ENCODE measurements at regions of chr15 and their contacts with region 1.

Region 1: DNA sequence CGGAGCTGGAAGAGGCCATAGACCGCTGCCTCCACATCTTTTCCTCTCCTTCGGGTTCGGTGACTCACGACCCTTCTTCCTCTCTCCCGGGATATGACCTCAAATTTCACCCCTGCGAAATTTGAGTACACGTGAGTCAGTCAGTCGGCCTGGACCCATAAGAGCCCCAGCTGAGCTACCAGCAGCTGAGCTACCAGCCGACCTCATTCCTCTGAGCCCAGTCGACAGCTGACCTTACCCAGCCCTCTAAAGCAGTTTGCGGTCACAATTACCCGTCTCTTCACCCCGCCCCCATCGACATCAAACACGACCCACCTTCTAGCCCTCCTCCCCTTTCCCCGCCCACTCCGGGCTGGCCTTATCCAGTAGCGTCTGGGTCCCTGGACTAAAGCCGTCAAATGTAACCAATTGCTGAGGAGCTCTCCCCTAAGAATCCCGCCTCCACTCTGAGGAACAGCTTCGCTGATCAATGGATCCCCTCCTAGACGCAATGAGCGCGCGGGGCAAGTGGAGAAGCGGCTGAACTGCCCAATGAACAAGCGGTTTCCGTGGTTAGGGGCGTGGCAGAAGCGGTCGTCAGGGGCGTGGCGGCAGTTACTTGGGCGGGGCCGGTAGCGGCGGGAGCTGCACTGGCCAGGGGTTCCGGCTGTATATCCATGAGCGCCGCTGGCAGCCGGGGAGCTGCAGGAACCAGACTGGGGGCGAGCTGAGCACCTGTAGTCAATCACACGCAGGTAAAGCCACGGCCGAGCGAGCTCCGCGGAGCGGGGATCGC is at the start of gene ABHD2:
- DNase-seq: peak; percentile 93 to 99 (median 97)
- ATAC-seq: peak; percentile 97
- H3K4me3 ChIP-seq: peak within 1 kb of the TSS; percentile 78
- H3K4me3 Mint-ChIP-seq: peak within 1 kb of the TSS in 1 of 10 donors; percentile 8
- H3K27ac ChIP-seq: peak within 1 kb of the TSS; percentile 81
- H3K27ac Mint-ChIP-seq: peak within 1 kb of the TSS in 7 of 9 donors; percentile 90 to 100 (median 97)
- H3K4me1 ChIP-seq: peaks cover 26 to 29% of the 10 kb centered on the region in 2 donors
- H3K4me1 Mint-ChIP-seq: peaks cover 30 to 43% (median 32%) of the 10 kb centered on the region in 7 donors
- H3K27me3 ChIP-seq: no peaks in the 10 kb centered on the region
- H3K27me3 Mint-ChIP-seq: no peaks in the 10 kb centered on the region
- total RNA-seq, gene ABHD2: 43.6 to 85.0 (median 67.7) TPM

Region 2: DNA sequence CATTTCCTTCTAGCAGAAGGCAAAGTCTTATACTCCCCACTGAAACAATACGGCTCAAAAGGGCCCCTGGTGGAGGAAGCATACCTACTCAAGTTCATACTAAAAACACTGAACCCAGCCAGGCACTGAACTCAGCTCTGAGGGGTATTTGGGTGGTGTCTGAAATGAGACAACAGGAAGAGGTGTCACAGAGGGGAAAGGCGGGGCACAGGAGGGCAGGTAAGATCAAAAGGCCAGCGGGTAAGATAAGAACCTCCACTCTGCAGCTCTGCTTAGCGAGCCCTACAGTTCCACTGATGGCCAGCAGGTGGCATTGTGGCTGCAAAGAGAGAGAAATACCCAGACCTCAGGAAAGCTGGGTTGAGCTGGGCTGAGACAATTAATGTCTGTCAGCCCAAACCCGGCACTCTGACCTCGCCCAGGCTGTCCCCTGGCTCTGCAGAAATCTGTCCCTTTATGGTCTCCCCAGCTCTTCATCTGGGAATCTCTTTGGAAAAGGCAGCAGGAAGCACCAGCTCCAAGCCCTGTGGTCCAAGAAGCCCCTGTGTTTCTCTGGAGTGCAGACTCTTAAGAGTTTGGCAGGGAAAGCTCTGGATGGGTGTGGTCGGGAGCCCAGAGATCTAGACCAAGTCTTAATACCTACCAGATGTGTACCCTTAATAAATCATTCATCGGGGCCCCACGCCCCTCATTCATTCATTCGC is 183.2 kb before region 1 on chr15:
- CTCF ChIA-PET with region 1: interaction called, 4 read pairs
- POLR2A ChIA-PET with region 1: interaction called, 5 read pairs
- intact Hi-C with region 1: loop called (anchors 1 to 2 kb)
- DNase-seq: peak; percentile 79 to 99 (median 98)
- ATAC-seq: peak; percentile 99
- H3K4me3 ChIP-seq: no peak overlapping the region
- H3K4me3 Mint-ChIP-seq: peak overlapping the region; percentile 16 to 78 (median 54)
- H3K27ac ChIP-seq: peak overlapping the region; percentile 70
- H3K27ac Mint-ChIP-seq: peak overlapping the region; percentile 76 to 98 (median 94)
- H3K4me1 ChIP-seq: peaks cover 19 to 37% of the 10 kb centered on the region in 2 donors
- H3K4me1 Mint-ChIP-seq: peaks cover 23 to 65% (median 52%) of the 10 kb centered on the region in 7 donors
- H3K27me3 ChIP-seq: no peaks in the 10 kb centered on the region
- H3K27me3 Mint-ChIP-seq: no peaks in the 10 kb centered on the region

Region 3: GRCh38 chr15:89017370-89018066 is 70.5 kb before region 1 on chr15:
- CTCF ChIA-PET with region 1: no interaction called
- POLR2A ChIA-PET with region 1: no interaction called
- intact Hi-C with region 1: loop called in 1 of 2 experiments (anchors 1 kb)
- DNase-seq: peak; percentile 73 to 88 (median 82)
- ATAC-seq: peak; percentile 96
- H3K4me3 ChIP-seq: peak overlapping the region; percentile 31
- H3K4me3 Mint-ChIP-seq: peak overlapping the region; percentile 56 to 83 (median 70)
- H3K27ac ChIP-seq: no peak overlapping the region
- H3K27ac Mint-ChIP-seq: peak overlapping the region; percentile 26 to 91 (median 78)
- H3K4me1 ChIP-seq: peaks cover 10 to 13% of the 10 kb centered on the region in 2 donors
- H3K4me1 Mint-ChIP-seq: peaks cover under 1 to 28% (median 13%) of the 10 kb centered on the region in 7 donors
- H3K27me3 ChIP-seq: no peaks in the 10 kb centered on the region
- H3K27me3 Mint-ChIP-seq: peaks cover 0 to 45% (median 0%) of the 10 kb centered on the region in 5 donors

Region 4: DNA sequence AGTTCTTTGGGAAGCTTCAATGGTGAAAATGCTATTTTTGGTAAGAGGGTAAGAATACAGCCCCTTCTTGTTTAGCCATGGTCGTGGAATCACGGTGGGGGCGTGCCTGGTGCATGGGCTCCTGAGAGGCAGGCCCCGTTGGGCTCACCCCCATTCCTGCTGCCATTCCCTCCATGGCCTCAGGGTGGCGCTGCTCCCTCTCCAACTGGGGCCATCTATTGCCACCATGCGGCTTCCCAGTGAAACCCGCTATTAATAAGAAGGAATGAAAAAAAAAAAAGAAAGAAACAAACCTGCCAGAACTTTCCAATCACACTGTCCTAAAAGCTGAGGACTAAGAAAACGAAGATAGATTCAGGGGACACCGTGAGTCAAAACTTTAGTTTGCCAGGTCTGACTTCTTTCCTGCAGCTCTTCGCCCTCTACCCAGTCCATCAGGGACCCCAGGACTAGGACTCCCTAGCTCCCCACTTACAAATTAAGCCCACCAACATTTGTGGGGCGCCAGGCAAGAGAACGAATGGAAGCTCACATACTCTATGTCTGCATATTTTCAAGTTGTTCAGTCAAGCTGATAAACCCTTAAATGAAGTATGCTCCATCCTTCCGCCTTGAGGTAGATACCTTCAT is 30.4 kb before region 1 on chr15:
- CTCF ChIA-PET with region 1: interaction called, 10 read pairs
- POLR2A ChIA-PET with region 1: interaction called, 9 read pairs
- intact Hi-C with region 1: loop called (anchors 1 to 5 kb)
- DNase-seq: peak; percentile 66 to 87 (median 78)
- ATAC-seq: peak; percentile 99
- H3K4me3 ChIP-seq: no peak overlapping the region
- H3K4me3 Mint-ChIP-seq: no peak overlapping the region
- H3K27ac ChIP-seq: no peak overlapping the region
- H3K27ac Mint-ChIP-seq: peak overlapping the region in 3 of 9 donors; percentile 25 to 62 (median 26)
- H3K4me1 ChIP-seq: no peaks in the 10 kb centered on the region
- H3K4me1 Mint-ChIP-seq: peaks cover 0 to 11% (median 5%) of the 10 kb centered on the region in 7 donors
- H3K27me3 ChIP-seq: no peaks in the 10 kb centered on the region
- H3K27me3 Mint-ChIP-seq: peaks cover 0 to 3% (median 0%) of the 10 kb centered on the region in 5 donors

Region 5: GRCh38 chr15:89068325-89068784 is 19.7 kb before region 1 on chr15:
- CTCF ChIA-PET with region 1: no interaction called
- POLR2A ChIA-PET with region 1: no interaction called
- intact Hi-C with region 1: no loop called
- DNase-seq: peak in 1 of 9 donors; percentile 67
- ATAC-seq: peak; percentile 63
- H3K4me3 ChIP-seq: no peak overlapping the region
- H3K4me3 Mint-ChIP-seq: no peak overlapping the region
- H3K27ac ChIP-seq: no peak overlapping the region
- H3K27ac Mint-ChIP-seq: peak overlapping the region in 1 of 9 donors; percentile 26
- H3K4me1 ChIP-seq: no peaks in the 10 kb centered on the region
- H3K4me1 Mint-ChIP-seq: peaks cover 0 to 8% (median 0%) of the 10 kb centered on the region in 7 donors
- H3K27me3 ChIP-seq: no peaks in the 10 kb centered on the region
- H3K27me3 Mint-ChIP-seq: no peaks in the 10 kb centered on the region

Region 6: DNA sequence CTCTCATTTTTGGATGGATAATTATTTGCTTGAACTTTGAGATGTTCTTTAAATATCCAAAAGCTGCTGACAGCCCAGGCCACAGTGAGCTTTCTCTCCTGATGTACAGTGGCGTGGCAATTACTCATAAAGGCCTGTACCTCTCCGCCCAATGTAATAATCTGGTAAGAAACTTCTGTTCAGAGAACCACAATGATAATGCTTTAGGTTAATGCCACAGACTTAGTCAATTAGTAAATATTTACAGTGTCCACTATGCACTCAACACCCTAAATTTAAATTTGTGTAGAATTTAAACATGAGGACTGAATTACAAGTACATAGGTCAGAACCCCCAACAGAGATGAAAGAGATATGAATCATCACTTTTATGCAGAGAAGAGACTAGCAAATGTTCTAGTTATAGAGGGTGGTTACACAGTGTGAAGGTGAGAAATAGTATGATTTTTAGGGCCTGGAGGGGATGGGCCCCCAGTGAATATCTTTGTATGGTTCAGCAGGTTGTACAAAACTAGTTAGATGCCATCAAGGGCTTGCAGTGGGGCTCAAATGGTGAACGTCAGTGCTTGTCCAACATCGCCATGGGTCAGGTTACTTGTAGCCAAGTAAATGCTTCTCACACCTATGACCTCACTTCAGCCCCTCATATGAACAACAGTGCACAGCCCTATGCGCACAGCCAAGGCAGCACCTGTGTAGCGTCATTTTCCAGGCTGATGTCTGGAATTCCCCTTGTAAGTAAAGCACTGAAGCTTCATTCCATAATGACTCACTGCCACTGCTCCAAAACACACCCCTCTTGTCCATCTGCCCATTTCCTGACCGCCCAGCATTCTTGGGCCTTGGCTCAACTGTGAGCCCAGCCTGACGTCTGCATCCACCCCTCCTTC is 13.5 kb after region 1 on chr15:
- CTCF ChIA-PET with region 1: interaction called, 3 read pairs
- POLR2A ChIA-PET with region 1: interaction called, 11 read pairs
- intact Hi-C with region 1: no loop called
- DNase-seq: no peak
- ATAC-seq: no peak
- H3K4me3 ChIP-seq: no peak overlapping the region
- H3K4me3 Mint-ChIP-seq: no peak overlapping the region
- H3K27ac ChIP-seq: no peak overlapping the region
- H3K27ac Mint-ChIP-seq: peak overlapping the region in 2 of 9 donors; percentile 14 to 72
- H3K4me1 ChIP-seq: no peaks in the 10 kb centered on the region
- H3K4me1 Mint-ChIP-seq: peaks cover 18 to 50% (median 40%) of the 10 kb centered on the region in 7 donors
- H3K27me3 ChIP-seq: no peaks in the 10 kb centered on the region
- H3K27me3 Mint-ChIP-seq: no peaks in the 10 kb centered on the region

Region 7: GRCh38 chr15:89129123-89129815 is 41.3 kb after region 1 on chr15:
- CTCF ChIA-PET with region 1: interaction called, 5 read pairs
- POLR2A ChIA-PET with region 1: interaction called, 8 read pairs
- intact Hi-C with region 1: loop called (anchors 1 to 5 kb)
- DNase-seq: peak; percentile 23 to 54 (median 45)
- ATAC-seq: peak; percentile 39
- H3K4me3 ChIP-seq: no peak overlapping the region
- H3K4me3 Mint-ChIP-seq: no peak overlapping the region
- H3K27ac ChIP-seq: no peak overlapping the region
- H3K27ac Mint-ChIP-seq: no peak overlapping the region
- H3K4me1 ChIP-seq: peaks cover 10 to 17% of the 10 kb centered on the region in 2 donors
- H3K4me1 Mint-ChIP-seq: peaks cover 10 to 33% (median 17%) of the 10 kb centered on the region in 7 donors
- H3K27me3 ChIP-seq: no peaks in the 10 kb centered on the region
- H3K27me3 Mint-ChIP-seq: no peaks in the 10 kb centered on the region

Region 8: DNA sequence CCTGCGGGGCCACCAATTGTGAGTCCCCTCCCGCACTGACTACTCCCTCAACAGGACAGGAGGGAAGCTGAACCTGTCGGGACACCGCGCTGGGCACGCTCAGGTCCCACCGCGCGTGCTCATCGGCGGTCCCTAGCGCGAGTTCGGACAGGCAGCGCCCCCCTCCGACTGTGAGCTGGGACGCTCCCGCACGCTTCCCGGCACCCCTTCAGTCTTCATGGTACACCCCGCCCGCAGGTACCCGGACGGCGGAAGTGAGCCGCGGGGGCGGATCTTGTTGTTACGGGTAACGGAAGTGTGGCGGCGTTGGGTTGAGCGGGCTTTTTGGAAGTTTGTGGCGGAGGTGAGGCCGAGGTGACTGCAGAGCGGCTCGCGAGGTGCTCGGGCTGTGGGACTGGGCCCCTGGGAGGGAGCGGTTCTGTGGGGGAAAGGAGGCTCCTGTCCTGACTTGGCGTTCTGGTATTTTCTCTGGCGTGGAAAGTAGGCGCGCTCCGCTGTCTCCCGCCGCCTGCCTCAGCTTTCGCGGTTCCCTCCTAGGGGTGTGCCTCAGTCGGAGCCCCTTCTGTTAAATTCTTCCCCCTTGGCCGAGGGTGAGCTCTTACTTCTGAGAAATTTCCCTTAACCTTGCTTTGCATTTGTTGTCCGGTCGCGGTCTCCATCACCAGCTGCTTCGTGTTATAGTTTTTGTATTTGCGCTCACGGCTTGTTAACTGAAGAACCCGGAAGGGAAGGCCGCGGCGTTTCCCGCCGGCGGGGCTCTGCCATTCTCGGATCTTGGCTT is 155.9 kb after region 1 on chr15 and contains the start of gene FANCI:
- CTCF ChIA-PET with region 1: no interaction called
- POLR2A ChIA-PET with region 1: no interaction called
- intact Hi-C with region 1: loop called (anchors 1 kb)
- DNase-seq: peak; percentile 89 to 97 (median 94)
- ATAC-seq: peak; percentile 100
- H3K4me3 ChIP-seq: peak within 1 kb of the TSS; percentile 79
- H3K4me3 Mint-ChIP-seq: peak within 1 kb of the TSS; percentile 86 to 98 (median 94)
- H3K27ac ChIP-seq: peak within 1 kb of the TSS; percentile 65
- H3K27ac Mint-ChIP-seq: peak within 1 kb of the TSS; percentile 78 to 96 (median 84)
- H3K4me1 ChIP-seq: peaks cover 6 to 13% of the 10 kb centered on the region in 2 donors
- H3K4me1 Mint-ChIP-seq: peaks cover 20 to 40% (median 26%) of the 10 kb centered on the region in 7 donors
- H3K27me3 ChIP-seq: no peaks in the 10 kb centered on the region
- H3K27me3 Mint-ChIP-seq: peaks cover 0 to 8% (median 0%) of the 10 kb centered on the region in 5 donors
- total RNA-seq, gene FANCI: 8.0 to 132 (median 9.7) TPM

Region 9: GRCh38 chr15:89812011-89812835 is 724.2 kb after region 1 on chr15:
- CTCF ChIA-PET with region 1: no interaction called
- POLR2A ChIA-PET with region 1: no interaction called
- intact Hi-C with region 1: no loop called
- DNase-seq: no peak
- ATAC-seq: peak; percentile 47
- H3K4me3 ChIP-seq: no peak overlapping the region
- H3K4me3 Mint-ChIP-seq: peak overlapping the region in 3 of 10 donors; percentile 15 to 62 (median 32)
- H3K27ac ChIP-seq: no peak overlapping the region
- H3K27ac Mint-ChIP-seq: peak overlapping the region in 1 of 9 donors; percentile 80
- H3K4me1 ChIP-seq: no peaks in the 10 kb centered on the region
- H3K4me1 Mint-ChIP-seq: peaks cover 0 to 10% (median 9%) of the 10 kb centered on the region in 7 donors
- H3K27me3 ChIP-seq: peaks cover 0 to 4% of the 10 kb centered on the region in 2 donors
- H3K27me3 Mint-ChIP-seq: peaks cover 30 to 56% (median 34%) of the 10 kb centered on the region in 5 donors